K562 (cell line): ENCODE measurements at regions of chr13 and their contacts with region 1.

Region 1: GRCh38 chr13:31424117-31424729 is 224.4 kb downstream of the B3GLCT start:
- DNase-seq: peak; percentile 43 to 69 (median 56)
- ATAC-seq: peak; percentile 98
- H3K4me3 ChIP-seq: no peak overlapping the region
- H3K27ac ChIP-seq: no peak overlapping the region
- H3K4me1 ChIP-seq: no peaks in the 10 kb centered on the region
- H3K27me3 ChIP-seq: no peaks in the 10 kb centered on the region; a peak in 1 of 5 replicates
- CTCF ChIP-seq: peak; percentile 74 to 78 (median 76)
- EP300 ChIP-seq: no peak
- POLR2A ChIP-seq: no peak
- RAD21 ChIP-seq: peak; percentile 56 to 72

Region 2: GRCh38 chr13:31236211-31236786 is 187.9 kb before region 1 on chr13:
- CTCF ChIA-PET with region 1: interaction called, 6 read pairs
- POLR2A ChIA-PET with region 1: no interaction called
- in situ Hi-C with region 1: loop called (anchors 10 kb)
- intact Hi-C with region 1: loop called (anchors 1 kb)
- DNase-seq: peak in 3 of 4 experiments; percentile 13 to 25 (median 14)
- ATAC-seq: peak; percentile 81
- H3K4me3 ChIP-seq: no peak overlapping the region
- H3K27ac ChIP-seq: no peak overlapping the region
- H3K4me1 ChIP-seq: no peaks in the 10 kb centered on the region
- H3K27me3 ChIP-seq: no peaks in the 10 kb centered on the region
- CTCF ChIP-seq: peak; percentile 36 to 63 (median 49); a peak in 5 of 6 replicates
- EP300 ChIP-seq: no peak
- POLR2A ChIP-seq: no peak
- RAD21 ChIP-seq: peak; percentile 50 to 65